GM10248 (cell line): ENCODE measurements at regions of chr1 and their contacts with region 1.

Region 1: GRCh38 chr1:21200767-21201166 is 24.1 kb upstream of the EIF4G3 start:
- DNase-seq: no peak
- CTCF ChIP-seq: no peak

Region 2: DNA sequence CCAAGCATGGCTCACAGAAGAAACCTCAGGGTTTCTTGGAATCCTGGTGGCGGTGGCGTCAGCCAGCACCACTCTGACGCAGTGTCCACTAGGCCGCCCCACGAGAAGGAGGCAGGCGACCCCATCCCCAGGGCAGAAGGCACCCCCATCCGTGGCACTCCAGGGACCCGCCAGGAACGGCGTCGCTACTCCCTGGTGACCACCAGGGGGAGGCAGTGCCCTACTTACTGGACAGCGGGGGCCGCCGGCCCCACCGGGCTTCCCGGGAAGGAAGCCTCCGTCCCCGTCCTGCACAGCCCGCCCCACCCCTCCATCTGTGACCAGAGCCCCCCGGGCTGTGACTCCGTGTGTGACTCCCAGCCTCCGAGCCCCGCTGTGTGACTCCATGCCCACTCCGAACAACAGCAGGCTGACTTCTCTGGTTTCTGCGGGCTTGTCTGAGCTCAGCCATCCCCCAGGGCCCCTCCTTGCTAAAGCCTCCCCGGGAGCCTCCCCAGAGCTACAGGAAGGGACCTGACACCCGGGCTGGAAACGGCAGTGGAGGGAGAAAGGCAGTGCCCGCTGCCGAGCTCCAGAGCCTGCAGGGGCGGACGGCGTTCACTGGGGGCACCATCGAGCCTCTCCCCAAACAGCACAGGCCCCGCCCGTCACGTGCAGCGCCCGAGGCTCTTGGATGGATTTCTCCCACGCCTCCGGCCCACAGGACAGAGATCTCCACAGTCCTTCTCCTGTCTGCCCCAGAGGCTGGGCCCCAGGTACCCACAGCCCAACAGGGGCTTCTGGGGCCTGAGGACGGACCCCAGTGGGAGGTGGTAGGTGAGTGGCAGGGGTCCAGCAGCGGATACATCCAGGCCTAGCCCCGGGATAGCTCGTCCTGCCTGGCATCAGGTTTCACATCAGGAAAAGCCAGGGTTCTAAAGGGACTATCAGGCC is 504.1 kb before region 1 on chr1:
- CTCF ChIA-PET with region 1: interaction called, 122 read pairs
- POLR2A ChIA-PET with region 1: no interaction called
- DNase-seq: peak; percentile 90
- CTCF ChIP-seq: peak; percentile 85

Region 3: GRCh38 chr1:20913242-20913641 is 287.5 kb before region 1 on chr1:
- CTCF ChIA-PET with region 1: interaction called, 11 read pairs
- POLR2A ChIA-PET with region 1: no interaction called
- DNase-seq: no peak
- CTCF ChIP-seq: no peak

Region 4: DNA sequence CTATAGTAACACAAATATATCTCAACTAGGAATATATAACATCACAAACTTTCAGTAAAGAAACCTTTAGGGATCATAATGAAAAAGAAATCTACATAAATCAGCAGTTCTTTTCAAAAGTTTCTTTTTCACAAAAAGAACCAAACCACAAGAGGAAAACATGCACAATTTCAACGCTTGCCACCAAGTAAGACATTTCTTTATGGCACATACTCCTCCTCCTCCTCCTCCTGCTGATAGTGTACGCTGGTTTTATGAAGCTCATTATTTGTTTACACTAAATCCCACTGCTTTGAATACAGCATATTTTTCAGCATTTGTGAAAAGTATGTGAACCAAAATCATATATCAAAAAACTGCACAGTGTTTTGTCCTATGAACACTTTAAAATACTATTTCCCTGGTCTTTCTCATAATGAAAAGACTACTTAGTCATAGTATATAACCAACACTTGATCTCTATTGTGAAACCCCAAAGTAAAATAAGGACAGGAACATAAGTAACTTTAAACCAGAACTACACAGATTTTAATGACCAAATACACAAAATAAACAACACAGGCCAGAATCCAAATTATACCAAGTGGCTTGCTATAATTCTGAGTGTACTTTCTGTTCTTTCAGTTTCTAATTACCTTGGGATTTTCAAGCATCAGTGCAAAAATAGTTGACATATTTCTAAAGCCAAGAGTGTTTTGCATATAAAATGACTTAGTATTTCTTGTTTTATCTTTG is 208.3 kb before region 1 on chr1:
- CTCF ChIA-PET with region 1: interaction called, 15 read pairs
- POLR2A ChIA-PET with region 1: no interaction called
- DNase-seq: peak; percentile 16
- CTCF ChIP-seq: no peak

Region 5: GRCh38 chr1:21176586-21177555 is 23.9 kb before region 1 on chr1 and contains the start of gene EIF4G3:
- CTCF ChIA-PET with region 1: interaction called, 19 read pairs
- POLR2A ChIA-PET with region 1: no interaction called
- DNase-seq: peak; percentile 100
- CTCF ChIP-seq: no peak

Region 6: GRCh38 chr1:21184276-21184675 is 16.5 kb before region 1 on chr1:
- CTCF ChIA-PET with region 1: interaction called, 30 read pairs
- POLR2A ChIA-PET with region 1: no interaction called
- DNase-seq: no peak
- CTCF ChIP-seq: no peak

Region 7: GRCh38 chr1:21216835-21217811 is 16.4 kb after region 1 on chr1:
- CTCF ChIA-PET with region 1: interaction called, 13 read pairs
- POLR2A ChIA-PET with region 1: no interaction called
- DNase-seq: peak; percentile 75
- CTCF ChIP-seq: peak; percentile 75